Activated CD4-positive, alpha-beta T cell treated with anti-CD3 and anti-CD28 coated beads for 36 hours (primary cell): ENCODE measurements at regions of chr7 and their contacts with region 1.

Region 1: DNA sequence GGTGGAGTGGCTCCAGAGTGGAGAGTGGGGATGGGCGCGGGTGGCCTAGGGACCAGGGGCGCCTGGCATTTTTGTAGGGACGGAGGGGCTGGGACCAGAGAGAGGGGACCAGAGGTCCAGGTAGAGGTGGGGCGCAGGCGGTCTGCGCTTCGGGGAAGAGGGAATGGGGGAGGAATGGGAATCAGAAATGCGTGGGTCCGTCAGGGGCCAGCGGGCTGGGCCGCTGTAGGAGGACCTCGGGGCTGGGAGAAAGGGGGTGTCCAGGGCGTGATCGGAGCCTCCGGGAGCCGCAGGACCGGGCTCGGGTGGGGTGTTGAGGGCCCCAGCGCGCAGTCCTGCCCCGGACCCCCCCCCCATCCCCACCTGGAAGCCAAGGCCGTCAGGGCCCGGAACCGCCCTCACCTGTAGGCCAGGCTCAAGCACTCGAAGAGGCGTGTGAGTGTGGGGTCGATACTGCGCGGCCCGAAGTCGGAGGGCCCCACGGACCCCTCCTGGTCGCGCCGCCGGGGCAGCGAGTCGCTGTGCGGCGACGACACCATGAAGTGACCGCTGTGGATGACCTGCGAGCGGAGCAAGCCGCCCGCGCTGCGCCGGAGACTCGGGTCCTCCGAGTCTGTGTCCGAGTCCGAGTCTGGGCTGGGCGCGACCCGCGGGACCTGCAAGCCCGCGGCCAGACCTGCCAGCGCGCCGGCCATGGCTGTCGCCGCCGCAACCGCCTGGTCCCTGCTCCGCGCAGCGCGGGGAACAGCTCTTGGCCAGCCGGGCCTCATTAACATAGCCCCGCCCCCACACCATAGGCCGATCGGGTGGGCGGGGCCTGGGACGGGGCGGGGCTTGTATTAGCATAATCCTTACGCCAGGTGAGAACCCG is at the start of gene MLXIPL:
- DNase-seq: peak; percentile 85
- ATAC-seq: peak; percentile 95
- H3K4me3 Mint-ChIP-seq: no peak within 1 kb of the TSS
- H3K27ac Mint-ChIP-seq: no peak within 1 kb of the TSS
- H3K4me1 Mint-ChIP-seq: peaks cover 8% of the 10 kb centered on the region
- H3K27me3 Mint-ChIP-seq: peaks cover 43% of the 10 kb centered on the region
- total RNA-seq, gene MLXIPL: not detected

Region 2: DNA sequence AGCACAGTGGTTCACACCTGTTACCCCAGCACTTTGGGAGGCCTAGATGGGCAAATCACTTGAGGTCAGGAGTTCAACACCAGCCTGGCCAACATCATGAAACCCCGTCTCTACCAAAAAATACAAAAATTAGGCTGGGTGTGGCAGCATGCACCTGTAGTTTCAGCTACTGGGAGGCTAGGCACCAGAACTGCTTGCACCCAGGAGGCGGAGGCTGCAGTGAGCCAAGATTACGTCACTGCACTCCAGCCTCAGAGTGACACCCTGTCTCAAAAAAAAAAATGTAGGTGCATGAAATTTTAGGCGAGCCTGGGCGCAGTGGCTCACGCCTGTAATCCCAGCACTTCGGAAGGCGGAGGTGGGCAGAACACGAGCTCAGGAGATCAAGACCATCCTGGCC is 76.2 kb before region 1 on chr7:
- CTCF ChIA-PET with region 1: no interaction called
- POLR2A ChIA-PET with region 1: no interaction called
- intact Hi-C with region 1: no loop called
- DNase-seq: no peak
- ATAC-seq: no peak
- H3K4me3 Mint-ChIP-seq: no peak overlapping the region
- H3K27ac Mint-ChIP-seq: no peak overlapping the region
- H3K4me1 Mint-ChIP-seq: peaks cover 22% of the 10 kb centered on the region
- H3K27me3 Mint-ChIP-seq: no peaks in the 10 kb centered on the region

Region 3: GRCh38 chr7:73638911-73639310 is 14.9 kb after region 1 on chr7:
- CTCF ChIA-PET with region 1: interaction called, 3 read pairs
- POLR2A ChIA-PET with region 1: no interaction called
- intact Hi-C with region 1: loop called in 1 of 2 experiments (anchors 1 kb)
- DNase-seq: no peak
- ATAC-seq: no peak
- H3K4me3 Mint-ChIP-seq: no peak overlapping the region
- H3K27ac Mint-ChIP-seq: no peak overlapping the region
- H3K4me1 Mint-ChIP-seq: peaks cover 4% of the 10 kb centered on the region
- H3K27me3 Mint-ChIP-seq: peaks cover 13% of the 10 kb centered on the region